ENCODE measurements at regions of chr9 and their contacts with region 1.

Region 1: DNA sequence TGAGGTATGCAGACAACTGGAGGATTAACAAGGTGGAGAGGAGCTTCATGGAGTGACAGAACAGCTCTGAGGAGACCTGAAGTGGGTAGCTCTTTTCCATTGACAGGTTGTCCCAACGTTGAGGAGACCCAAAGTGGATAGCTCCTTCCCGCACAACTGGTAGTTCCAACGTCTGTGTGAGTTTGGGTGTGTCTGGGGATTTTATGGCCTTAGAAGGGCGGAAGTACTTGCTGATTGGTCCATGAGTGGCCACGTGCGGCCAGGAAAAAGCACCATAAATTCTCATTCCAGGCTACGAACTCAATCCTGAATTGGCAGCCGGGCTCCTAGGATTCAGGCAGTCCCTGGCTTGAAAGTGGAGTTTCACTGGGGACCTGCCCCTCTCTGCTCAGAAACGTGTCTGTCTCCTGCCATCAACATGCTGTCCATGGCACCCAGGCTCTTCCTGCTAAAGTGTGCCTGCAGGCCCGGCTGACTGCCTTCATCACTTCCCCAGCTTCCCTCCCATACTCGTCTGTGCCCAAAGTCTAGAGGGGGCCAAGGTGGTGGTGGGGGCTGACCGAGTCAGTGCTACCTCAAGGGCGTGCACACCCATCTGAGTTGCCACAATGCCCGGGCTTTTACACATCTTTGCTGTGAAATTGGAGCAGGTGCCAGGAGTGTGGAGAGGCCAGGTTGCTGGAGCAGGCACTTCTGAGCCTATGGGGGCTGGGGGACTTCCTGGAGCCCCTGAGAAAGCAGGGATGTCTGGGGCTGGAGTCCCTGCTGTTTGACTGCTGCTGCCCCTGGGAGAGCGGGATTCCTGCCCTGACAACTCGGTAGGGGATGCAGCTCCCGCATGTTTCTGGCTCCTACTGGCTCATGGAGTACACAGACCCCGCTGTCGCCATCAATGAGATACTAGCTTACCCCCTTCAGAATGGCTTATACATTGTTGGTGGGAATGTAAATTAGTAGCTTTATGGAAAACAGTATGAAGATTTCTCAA is 2034.6 kb upstream of the ACO1 start:
- DNase-seq: no peak
- H3K4me3 ChIP-seq: no peak overlapping the region
- CTCF ChIP-seq: no peak
- POLR2A ChIP-seq: no peak

Region 2: GRCh38 chr9:30713243-30713642 is 363.4 kb after region 1 on chr9:
- intact Hi-C with region 1: no loop called
- DNase-seq: no peak
- H3K4me3 ChIP-seq: no peak overlapping the region
- CTCF ChIP-seq: no peak
- POLR2A ChIP-seq: no peak

Region 3: GRCh38 chr9:32294106-32294505 is 1944.3 kb after region 1 on chr9:
- intact Hi-C with region 1: loop called (anchors 5 kb)
- DNase-seq: no peak
- H3K4me3 ChIP-seq: no peak overlapping the region
- CTCF ChIP-seq: no peak
- POLR2A ChIP-seq: no peak

Measured in lower leg skin (tissue), 4 donors.